Right ventricle myocardium superior (tissue), 1 donor: ENCODE measurements at regions of chr1 and their contacts with region 1.

Region 1: DNA sequence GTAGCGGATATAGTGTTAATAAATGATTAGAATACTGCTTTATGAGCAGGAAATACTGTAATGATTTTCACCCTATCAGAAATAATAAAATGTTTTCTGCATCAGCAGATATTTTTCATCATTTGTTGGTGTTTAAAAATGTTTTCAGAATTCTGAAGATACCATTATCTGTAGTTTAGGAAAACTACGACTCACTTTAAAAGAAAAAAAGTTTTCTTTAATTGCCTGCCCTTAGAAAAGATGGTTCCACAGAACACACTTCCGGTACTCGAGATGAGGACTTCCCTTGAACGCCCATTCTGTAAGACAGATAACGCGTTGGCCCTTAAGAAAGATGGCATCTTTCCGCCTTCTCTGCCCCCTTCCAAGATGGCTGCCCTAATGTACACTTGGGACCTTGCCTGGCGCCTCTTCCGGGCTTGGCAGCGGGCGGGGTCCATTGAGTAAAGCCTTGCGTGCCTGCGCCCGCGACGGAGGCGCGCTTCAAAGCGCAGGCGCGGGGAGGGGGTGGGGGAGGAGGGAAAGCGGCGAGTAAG is at the start of gene SZRD1:
- DNase-seq: peak; percentile 99
- ATAC-seq: peak; percentile 93
- total RNA-seq, gene SZRD1: 91.1 TPM

Region 2: DNA sequence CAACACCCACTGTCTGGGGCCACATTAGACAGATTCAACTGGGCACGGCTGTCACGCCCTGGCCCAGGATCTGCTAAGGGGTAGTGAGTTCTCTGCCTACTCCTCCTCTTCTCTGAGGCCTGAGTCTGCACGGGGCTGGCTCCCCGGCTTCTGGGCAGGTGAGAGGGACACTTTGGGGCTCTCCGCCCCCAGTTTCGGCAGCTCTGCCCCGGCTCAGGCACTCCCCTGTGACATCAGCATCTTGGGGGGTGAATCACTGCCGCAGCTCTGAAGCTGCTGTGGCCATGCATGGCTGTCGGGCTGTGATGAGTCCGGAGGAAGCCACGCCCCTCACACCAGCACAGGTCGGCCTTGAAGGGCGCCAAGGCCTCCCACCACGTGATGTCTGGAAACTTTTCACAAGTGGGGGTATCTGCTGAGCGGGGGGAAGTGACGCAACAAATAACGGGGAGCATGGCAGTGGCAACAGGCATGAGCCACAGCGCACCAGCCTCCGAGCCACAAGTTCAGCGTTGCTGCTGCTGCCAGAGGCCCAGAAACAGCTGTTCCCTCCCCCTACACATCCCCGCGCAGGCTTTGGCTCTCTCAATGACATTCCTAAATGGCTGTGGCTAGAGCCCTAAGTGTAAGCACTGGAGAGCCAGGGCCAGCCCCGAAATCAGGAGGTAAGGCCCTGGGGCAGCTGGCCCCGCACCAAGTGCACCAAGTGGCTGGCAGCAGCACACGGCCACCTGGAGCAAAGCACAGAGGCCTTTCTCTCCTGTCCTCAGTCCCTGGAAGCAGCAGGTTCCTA is 417.1 kb before region 1 on chr1:
- intact Hi-C with region 1: no loop called
- DNase-seq: peak; percentile 90
- ATAC-seq: peak; percentile 83

Region 3: DNA sequence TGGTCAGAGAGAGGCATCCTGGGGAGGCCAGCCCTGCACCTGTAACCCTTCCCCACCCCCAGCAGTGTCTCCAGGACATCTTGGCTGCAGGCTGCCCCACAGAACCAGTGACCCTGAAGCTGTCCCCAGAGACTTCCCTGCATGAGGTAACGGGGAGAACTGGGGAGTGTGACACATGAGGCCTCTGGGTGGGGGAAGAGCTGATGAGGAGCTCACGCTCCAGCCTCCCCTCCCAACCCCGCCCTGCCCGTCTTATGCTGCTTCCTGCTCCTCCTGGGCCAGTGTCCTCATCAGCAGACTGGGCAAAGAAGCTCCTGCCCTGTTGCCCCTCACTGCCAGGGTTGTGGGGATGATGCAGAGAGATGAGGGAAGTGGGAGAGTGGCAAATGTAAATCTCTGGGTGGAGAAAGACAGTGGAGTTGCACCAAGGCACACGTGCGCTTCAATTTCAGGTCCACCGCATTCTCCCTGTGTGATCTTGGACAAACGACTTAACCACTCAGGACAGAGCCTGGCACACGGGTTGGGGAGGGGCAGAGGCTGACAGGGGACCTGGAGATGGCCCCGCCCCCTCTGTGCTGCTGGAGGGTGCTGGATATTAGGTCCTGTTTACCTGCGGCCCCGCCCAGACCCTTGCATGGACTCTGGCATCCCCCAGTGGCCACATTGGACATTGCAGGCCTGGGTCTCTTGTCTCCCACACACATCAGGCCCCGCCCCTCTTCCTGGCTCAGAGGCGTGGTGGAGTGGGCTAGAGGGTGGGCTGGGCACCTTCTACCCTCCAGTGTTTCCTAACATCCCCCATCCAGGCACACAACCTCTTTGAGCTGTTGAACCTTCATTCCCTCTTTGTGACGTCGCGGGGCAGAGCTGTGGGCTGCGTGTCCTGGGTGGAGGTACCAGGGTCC is 310.9 kb before region 1 on chr1:
- intact Hi-C with region 1: no loop called
- DNase-seq: peak; percentile 91
- ATAC-seq: peak; percentile 85

Region 4: GRCh38 chr1:16073490-16074119 is 293.2 kb before region 1 on chr1 and contains the start of gene FAM131C:
- intact Hi-C with region 1: loop called (anchors 5 kb)
- DNase-seq: no peak
- ATAC-seq: peak; percentile 28
- total RNA-seq, gene FAM131C: 4.5 TPM

Region 5: GRCh38 chr1:16206547-16207317 is 160.1 kb before region 1 on chr1:
- intact Hi-C with region 1: loop called (anchors 5 kb)
- DNase-seq: peak; percentile 98
- ATAC-seq: peak; percentile 96

Region 6: DNA sequence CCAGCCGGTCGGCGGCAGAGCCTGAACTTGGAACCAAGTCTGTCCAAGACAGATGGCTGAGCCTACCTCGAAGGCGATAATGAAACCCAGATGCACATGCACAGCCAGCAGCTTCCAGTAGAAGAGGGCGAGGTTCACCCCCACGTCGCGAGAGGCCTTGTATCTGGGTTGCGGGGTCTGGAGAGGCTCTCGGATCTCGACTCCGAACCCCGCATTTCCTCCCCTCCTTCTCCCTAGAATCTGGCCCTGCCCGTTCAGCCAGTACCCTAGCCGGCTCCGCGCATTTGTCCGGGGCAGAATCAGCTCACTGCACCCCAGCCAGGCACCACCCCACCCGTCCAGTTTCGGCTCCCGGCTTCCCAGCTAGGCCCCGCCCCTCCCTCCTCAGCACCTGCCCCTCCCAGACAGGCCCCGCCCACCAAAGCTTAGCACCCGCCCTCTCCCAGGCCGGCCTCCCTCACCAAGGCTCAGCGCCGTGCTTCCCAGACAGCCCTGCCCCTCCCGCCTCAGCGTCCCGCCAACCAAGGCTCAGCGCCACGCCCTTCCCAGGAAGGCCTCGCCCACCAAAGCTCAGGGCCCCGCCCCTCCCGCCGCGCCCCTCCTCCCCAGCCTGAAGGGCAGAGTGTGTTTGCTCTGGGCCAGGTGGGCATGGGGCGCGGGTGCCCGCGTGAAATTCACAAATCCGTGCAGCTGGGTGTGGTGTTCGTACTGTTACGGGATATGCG is 149.6 kb before region 1 on chr1:
- intact Hi-C with region 1: no loop called
- DNase-seq: peak; percentile 99
- ATAC-seq: peak; percentile 98